Panc1 (cell line): ENCODE measurements at regions of chr5 and their contacts with region 1.

Region 1: GRCh38 chr5:40798012-40798855 is at the start of gene PRKAA1:
- DNase-seq: peak; percentile 73
- ATAC-seq: peak; percentile 97
- H3K4me3 ChIP-seq: peak within 1 kb of the TSS; percentile 96 to 99
- H3K27ac ChIP-seq: peak within 1 kb of the TSS; percentile 94
- H3K4me1 ChIP-seq: peaks cover 17% of the 10 kb centered on the region
- H3K27me3 ChIP-seq: no peaks in the 10 kb centered on the region
- CTCF ChIP-seq: peak; percentile 83
- total RNA-seq, gene PRKAA1: 75.8 TPM

Region 2: GRCh38 chr5:40746703-40747102 is 51.5 kb before region 1 on chr5:
- CTCF ChIA-PET with region 1: interaction called, 5 read pairs
- POLR2A ChIA-PET with region 1: interaction called, 13 read pairs
- in situ Hi-C with region 1: no loop called
- intact Hi-C with region 1: no loop called
- DNase-seq: no peak
- ATAC-seq: no peak
- H3K4me3 ChIP-seq: no peak overlapping the region
- H3K27ac ChIP-seq: no peak overlapping the region
- H3K4me1 ChIP-seq: no peaks in the 10 kb centered on the region
- H3K27me3 ChIP-seq: no peaks in the 10 kb centered on the region
- CTCF ChIP-seq: no peak